ENCODE measurements at regions of chr11 and their contacts with region 1.

Region 1: GRCh38 chr11:22625448-22626287 is at the start of gene FANCF:
- DNase-seq: peak; percentile 94
- ATAC-seq: peak; percentile 99
- total RNA-seq, gene FANCF: 4.8 TPM

Region 2: DNA sequence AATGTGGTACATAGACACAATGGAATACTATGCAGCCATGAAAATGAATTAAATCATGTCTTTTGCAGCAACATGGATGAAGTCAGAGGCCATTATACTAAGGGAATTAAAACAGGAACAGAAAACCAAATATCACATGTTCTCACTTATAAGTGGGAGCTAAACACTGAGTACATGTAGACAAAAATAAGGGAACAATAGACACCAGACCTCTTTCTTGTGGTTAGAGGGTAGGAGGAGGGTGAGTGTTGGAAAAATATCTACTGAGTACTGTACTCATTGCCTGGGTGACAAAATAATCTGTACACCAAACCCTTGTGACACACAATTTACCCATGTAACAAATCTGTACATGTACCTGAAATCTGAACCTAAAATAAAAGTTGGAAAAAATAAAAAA is 491.9 kb before region 1 on chr11:
- intact Hi-C with region 1: no loop called
- DNase-seq: no peak
- ATAC-seq: no peak

Region 3: GRCh38 chr11:22307065-22307464 is 318.6 kb before region 1 on chr11:
- intact Hi-C with region 1: no loop called
- DNase-seq: no peak
- ATAC-seq: no peak

Region 4: GRCh38 chr11:22666688-22667439 is 41.2 kb after region 1 on chr11:
- intact Hi-C with region 1: loop called (anchors 2 kb)
- DNase-seq: peak; percentile 73
- ATAC-seq: peak; percentile 89

Region 5: GRCh38 chr11:22730319-22730718 is 104.7 kb after region 1 on chr11:
- intact Hi-C with region 1: loop called (anchors 2 kb)
- DNase-seq: no peak
- ATAC-seq: no peak

Region 6: GRCh38 chr11:22829231-22830081 is 203.8 kb after region 1 on chr11 and contains the start of gene SVIP:
- intact Hi-C with region 1: loop called (anchors 5 kb)
- DNase-seq: peak; percentile 95
- ATAC-seq: peak; percentile 98
- total RNA-seq, gene SVIP: 24.9 TPM

Measured in Right ventricle myocardium inferior (tissue), 1 donor.